ENCODE measurements at regions of chr7 and their contacts with region 1.

Region 1: GRCh38 chr7:75048435-75049379 is 24.9 kb downstream of the RCC1L start:
- DNase-seq: no peak
- H3K4me3 ChIP-seq: no peak overlapping the region
- H3K27ac ChIP-seq: peak overlapping the region in 1 of 2 experiments; percentile 34; a peak in 2 of 4 replicates
- H3K4me1 ChIP-seq: peaks cover 0 to 2% of the 10 kb centered on the region in 2 experiments; a peak in 2 of 4 replicates
- H3K27me3 ChIP-seq: no peaks in the 10 kb centered on the region
- CTCF ChIP-seq: no peak
- EP300 ChIP-seq: no peak
- RAD21 ChIP-seq: no peak

Region 2: DNA sequence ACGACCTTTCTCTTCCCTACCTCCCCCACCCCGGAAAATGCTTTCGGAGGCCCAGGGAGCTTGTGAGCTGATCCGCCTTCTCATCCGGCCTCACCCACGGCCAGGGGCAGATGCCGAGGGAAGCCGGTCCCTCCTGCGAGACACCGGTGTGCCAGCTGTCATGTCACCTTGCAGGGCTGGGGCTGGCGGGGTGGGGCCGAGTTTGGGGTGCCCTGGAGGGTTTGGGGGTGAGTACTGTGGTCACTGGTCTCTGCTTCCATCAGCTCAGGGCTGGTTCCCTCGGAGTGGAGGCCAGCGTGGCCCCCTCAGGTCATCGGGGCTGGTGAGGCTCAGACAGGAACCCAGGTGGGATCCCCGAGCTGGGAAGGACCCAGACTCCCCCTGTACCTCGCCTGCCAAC is 23.8 kb before region 1 on chr7:
- CTCF ChIA-PET with region 1: interaction called, 12 read pairs
- POLR2A ChIA-PET with region 1: no interaction called
- DNase-seq: no peak
- H3K4me3 ChIP-seq: no peak overlapping the region
- H3K27ac ChIP-seq: no peak overlapping the region
- H3K4me1 ChIP-seq: no peaks in the 10 kb centered on the region
- H3K27me3 ChIP-seq: no peaks in the 10 kb centered on the region
- CTCF ChIP-seq: no peak
- EP300 ChIP-seq: no peak
- RAD21 ChIP-seq: no peak

Region 3: DNA sequence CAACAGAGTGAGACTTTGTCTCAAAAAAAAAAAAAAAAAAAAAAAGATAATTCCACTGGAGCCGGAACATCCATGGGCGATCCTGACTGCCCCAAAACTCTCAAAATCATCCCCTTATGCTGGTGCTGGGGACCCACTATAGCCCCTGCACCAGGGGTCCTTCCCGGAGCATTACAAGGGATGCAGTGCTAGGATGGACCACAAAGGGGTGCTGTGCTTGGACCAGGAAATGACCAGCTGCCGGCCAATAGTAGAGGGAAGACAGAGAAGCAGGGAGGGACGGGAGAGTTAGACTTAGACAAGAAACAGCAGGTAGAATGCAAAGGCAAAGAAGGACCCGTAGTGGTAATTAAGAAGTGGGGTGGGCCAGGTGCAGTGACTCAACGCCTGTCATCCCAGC is 15.7 kb before region 1 on chr7:
- CTCF ChIA-PET with region 1: interaction called, 54 read pairs
- POLR2A ChIA-PET with region 1: no interaction called
- DNase-seq: peak; percentile 74
- H3K4me3 ChIP-seq: no peak overlapping the region
- H3K27ac ChIP-seq: no peak overlapping the region
- H3K4me1 ChIP-seq: no peaks in the 10 kb centered on the region
- H3K27me3 ChIP-seq: no peaks in the 10 kb centered on the region
- CTCF ChIP-seq: peak; percentile 53
- EP300 ChIP-seq: no peak
- RAD21 ChIP-seq: no peak